ENCODE measurements at regions of chr5 and their contacts with region 1.

Region 1: GRCh38 chr5:176447982-176448608 is at the start of gene FAF2:
- DNase-seq: peak; percentile 96
- H3K4me3 Mint-ChIP-seq: peak within 1 kb of the TSS; percentile 87
- H3K27ac Mint-ChIP-seq: peak within 1 kb of the TSS; percentile 97
- H3K4me1 Mint-ChIP-seq: peaks cover 37% of the 10 kb centered on the region
- H3K27me3 Mint-ChIP-seq: no peaks in the 10 kb centered on the region
- total RNA-seq, gene FAF2: 32.3 to 41.0 TPM

Region 2: DNA sequence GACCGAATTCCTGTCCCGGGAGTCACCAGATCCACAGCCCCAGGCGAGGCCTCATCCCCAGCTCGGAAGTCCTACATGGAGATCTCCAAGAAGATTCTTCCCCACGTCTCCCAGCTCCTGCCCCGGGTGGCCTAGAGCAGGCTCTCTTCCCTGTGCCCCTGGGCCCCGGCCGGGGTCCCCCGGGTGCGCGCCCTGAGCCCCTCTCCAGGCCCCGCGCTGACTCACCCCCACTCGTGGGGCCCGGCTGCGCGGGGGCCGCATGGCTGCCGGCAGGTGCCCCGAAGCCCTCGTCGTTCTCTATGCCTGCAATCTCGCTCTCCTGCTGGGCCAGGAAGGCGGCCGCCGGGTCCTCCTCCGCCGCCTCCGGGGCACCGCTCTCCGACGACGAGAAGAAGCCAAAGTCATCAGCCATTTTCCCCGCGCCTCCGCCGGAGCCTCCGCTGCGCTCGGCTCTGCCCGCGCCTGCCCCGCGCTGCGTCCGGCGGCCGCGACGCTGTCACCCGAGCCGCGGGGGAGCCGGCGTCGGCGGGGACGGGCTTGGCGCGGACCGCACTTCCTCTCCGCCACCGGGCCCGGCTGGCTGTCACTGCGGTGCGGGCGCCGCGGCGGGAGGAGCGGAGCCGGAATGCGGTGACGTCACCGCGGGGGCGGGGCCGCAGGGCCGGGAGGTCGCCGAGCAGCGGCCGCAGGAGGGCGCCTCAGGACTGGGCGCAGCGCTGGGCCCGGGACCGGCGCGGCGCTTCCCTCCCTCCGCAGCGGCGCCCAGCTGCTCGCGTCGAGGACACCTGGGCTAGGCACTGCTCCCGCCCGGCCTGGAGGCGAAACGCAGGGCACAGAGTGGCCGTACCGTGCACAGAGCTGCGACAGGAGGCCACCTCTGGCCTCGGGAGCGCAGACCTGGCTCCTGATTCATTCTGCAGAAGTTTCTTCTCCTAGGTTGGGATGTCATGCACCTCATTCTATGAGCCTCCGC is 31.9 kb before region 1 on chr5 and contains the start of gene CLTB:
- CTCF ChIA-PET with region 1: interaction called, 10 read pairs
- POLR2A ChIA-PET with region 1: no interaction called
- DNase-seq: peak; percentile 86
- H3K4me3 Mint-ChIP-seq: peak within 1 kb of the TSS; percentile 77
- H3K27ac Mint-ChIP-seq: peak within 1 kb of the TSS; percentile 84
- H3K4me1 Mint-ChIP-seq: peaks cover 33% of the 10 kb centered on the region
- H3K27me3 Mint-ChIP-seq: peaks cover 9% of the 10 kb centered on the region
- total RNA-seq, gene CLTB: 53.8 to 65.8 TPM

Region 3: DNA sequence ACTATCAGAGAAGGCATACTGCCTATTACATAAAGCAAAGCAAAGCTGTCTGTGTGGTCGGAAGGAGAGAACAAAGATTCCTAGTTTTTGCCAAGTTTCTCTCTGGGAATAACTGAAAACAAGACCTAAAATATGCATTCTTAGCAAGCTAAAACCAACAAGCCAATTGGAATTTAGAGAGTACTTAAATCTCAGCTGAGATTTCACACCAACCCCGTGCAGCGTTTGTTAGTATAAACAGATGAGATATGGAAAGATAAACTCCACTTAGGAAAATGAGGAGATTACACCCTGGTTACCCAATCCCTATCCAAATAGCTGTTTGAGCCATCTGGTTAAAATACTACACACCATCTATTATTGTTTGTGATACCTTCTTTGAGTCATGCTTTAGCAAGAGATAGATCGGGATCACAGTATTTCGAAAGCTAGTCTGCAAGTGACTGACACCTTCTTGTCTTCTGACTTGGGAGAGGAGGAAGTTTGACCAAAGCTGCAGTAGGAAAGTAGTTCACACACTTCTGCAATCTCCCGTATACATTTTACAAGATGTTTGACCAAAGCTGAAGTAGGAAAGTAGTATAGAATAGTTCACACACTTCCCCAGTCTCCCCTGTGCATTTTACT is 18.3 kb after region 1 on chr5:
- CTCF ChIA-PET with region 1: interaction called, 14 read pairs
- POLR2A ChIA-PET with region 1: interaction called, 4 read pairs
- DNase-seq: no peak
- H3K4me3 Mint-ChIP-seq: no peak overlapping the region
- H3K27ac Mint-ChIP-seq: no peak overlapping the region
- H3K4me1 Mint-ChIP-seq: peaks cover 4% of the 10 kb centered on the region
- H3K27me3 Mint-ChIP-seq: no peaks in the 10 kb centered on the region

Region 4: DNA sequence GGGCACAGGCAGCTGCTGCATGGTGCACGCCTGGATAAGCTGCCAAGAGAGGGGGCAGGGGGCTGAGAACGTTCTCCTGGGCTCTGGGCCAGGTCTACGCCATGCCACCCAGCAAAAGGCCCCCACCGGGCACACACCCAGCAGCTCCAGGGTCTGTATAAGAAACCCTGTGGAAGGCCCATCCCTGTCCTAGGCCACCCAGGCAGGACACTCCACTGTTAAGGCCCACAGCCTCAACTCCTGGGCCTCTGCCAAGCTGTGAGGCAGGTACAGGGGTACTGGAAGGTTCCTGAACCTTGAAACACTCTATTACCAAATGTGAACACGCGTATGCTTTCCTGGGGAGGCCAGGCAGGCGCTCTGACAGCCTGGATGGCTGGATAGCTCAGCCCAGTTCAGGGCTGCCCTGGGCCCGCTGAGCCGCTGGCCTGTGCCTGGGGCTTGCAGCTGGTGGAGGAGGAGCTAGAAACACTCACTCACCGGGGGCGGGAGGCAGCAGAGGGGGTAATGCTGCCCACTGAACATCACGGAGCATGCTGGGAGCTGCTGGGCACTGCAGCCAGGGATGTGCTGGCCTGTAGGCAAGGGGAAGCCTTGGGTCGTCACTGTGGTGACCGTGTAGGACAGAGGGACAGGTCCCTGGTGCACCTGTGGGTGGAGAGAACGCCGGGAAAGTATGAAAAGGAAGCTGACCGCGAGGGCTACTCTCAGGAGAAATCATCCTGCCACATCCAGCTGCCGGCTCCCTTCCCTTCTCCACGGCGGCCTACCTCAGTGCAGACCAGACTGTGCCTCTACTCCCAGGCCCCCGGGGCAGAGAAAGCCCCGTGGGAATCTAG is 83.1 kb after region 1 on chr5:
- CTCF ChIA-PET with region 1: interaction called, 31 read pairs
- POLR2A ChIA-PET with region 1: interaction called, 4 read pairs
- DNase-seq: no peak
- H3K4me3 Mint-ChIP-seq: peak overlapping the region; percentile 82
- H3K27ac Mint-ChIP-seq: peak overlapping the region; percentile 93
- H3K4me1 Mint-ChIP-seq: peaks cover 53% of the 10 kb centered on the region
- H3K27me3 Mint-ChIP-seq: no peaks in the 10 kb centered on the region

Region 5: DNA sequence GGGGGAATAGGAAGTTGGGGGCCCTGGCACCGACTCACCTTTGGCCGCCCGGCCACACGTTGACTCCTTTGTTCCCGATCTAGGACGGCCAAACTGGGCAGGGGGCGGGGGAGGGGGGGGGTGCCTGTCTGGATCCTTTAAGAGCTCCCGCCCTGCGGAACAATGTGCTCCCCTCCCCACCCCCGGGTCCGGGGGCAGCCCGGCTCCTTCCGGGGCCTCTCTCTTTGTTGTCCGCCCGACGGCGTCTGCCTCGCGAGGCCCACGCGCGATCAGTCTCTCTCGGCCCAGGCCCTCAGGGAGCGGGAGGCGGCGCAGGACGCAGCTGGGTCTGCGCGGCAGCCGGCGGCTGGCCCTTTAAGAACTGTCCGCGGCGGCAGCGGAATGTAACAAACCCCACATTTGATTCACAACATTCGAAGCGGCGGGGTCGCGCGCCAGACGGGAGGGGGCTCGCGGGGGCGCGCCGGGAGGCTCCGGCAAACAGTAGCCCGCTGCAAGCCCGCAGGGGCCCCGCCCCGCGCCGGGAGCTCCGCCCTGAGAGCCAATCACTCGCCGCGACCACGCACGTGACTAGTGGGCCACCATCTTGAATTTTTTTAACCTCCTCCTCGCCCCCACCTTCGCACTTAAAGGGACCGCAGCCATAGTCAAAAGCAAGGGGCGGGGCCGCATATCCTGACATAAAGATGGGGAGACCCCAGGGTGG is 89.0 kb after region 1 on chr5 and contains the start of gene RNF44:
- CTCF ChIA-PET with region 1: interaction called, 31 read pairs
- POLR2A ChIA-PET with region 1: interaction called, 4 read pairs
- DNase-seq: peak; percentile 98
- H3K4me3 Mint-ChIP-seq: peak within 1 kb of the TSS; percentile 94
- H3K27ac Mint-ChIP-seq: peak within 1 kb of the TSS; percentile 100
- H3K4me1 Mint-ChIP-seq: peaks cover 66% of the 10 kb centered on the region
- H3K27me3 Mint-ChIP-seq: no peaks in the 10 kb centered on the region
- total RNA-seq, gene RNF44: 137 TPM

Region 6: GRCh38 chr5:176543428-176544173 is 95.5 kb after region 1 on chr5:
- CTCF ChIA-PET with region 1: interaction called, 17 read pairs
- POLR2A ChIA-PET with region 1: no interaction called
- DNase-seq: peak; percentile 78
- H3K4me3 Mint-ChIP-seq: peak overlapping the region; percentile 95
- H3K27ac Mint-ChIP-seq: peak overlapping the region; percentile 96
- H3K4me1 Mint-ChIP-seq: peaks cover 62% of the 10 kb centered on the region
- H3K27me3 Mint-ChIP-seq: no peaks in the 10 kb centered on the region

Measured in activated CD4-positive, alpha-beta T cell treated with anti-CD3 and anti-CD28 coated beads, Interleukin-2, amount 10 ng/mL, durations not matched to agents 7 days and 5 days (primary cell).